Endothelial cell of umbilical vein (primary cell): ENCODE measurements at regions of chr6 and their contacts with region 1.

Region 1: GRCh38 chr6:99151634-99152344 is 197.7 kb downstream of the FAXC start:
- DNase-seq: peak; percentile 29
- H3K4me3 ChIP-seq: no peak overlapping the region
- H3K27ac ChIP-seq: no peak overlapping the region
- H3K4me1 ChIP-seq: no peaks in the 10 kb centered on the region
- H3K27me3 ChIP-seq: no peaks in the 10 kb centered on the region
- CTCF ChIP-seq: peak; percentile 66 to 67
- POLR2A ChIP-seq: no peak

Region 2: DNA sequence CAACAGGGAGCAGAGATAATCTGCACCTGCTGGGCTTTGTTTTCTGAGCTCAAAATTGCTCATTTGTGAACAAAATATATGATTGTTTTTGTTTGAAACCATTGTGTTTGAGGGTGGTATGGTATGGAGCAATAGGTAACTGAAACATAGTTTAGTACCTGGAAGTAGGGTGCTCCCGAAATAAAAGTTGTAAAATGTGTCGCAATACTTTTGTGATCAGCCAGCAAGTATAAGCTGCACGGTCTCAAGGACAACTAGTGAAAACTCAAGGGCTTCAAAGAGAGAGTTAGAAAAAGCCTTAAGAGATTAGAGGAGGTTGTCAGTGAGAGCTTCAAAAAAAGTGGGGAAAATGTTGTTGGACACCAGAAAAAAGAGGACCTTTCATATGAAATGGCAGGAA is 897.2 kb before region 1 on chr6:
- CTCF ChIA-PET with region 1: no interaction called
- POLR2A ChIA-PET with region 1: no interaction called
- dilution Hi-C with region 1: no loop called
- intact Hi-C with region 1: no loop called
- DNase-seq: no peak
- H3K4me3 ChIP-seq: no peak overlapping the region
- H3K27ac ChIP-seq: no peak overlapping the region
- H3K4me1 ChIP-seq: no peaks in the 10 kb centered on the region
- H3K27me3 ChIP-seq: no peaks in the 10 kb centered on the region
- CTCF ChIP-seq: no peak
- POLR2A ChIP-seq: no peak

Region 3: DNA sequence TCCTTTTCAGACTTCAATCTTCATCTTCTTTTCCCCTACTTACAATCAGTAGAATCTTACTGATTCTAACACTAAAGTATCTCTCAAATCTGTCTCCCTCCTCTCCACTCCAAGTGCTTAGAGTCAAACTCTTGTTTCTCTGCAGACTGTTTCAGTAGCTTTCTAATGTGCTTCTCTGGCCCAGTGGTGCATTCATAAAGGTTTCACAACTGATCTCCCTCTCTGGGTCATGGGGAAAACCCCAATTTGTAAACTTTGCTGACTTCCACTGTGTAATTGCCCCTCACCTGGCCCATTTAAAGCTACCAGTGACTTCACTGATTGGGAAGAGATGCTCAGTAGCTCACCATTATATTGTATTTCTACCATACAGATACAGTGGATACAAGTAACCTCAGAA is 14.0 kb after region 1 on chr6:
- CTCF ChIA-PET with region 1: interaction called, 14 read pairs
- POLR2A ChIA-PET with region 1: no interaction called
- dilution Hi-C with region 1: no loop called
- intact Hi-C with region 1: no loop called
- DNase-seq: no peak
- H3K4me3 ChIP-seq: no peak overlapping the region
- H3K27ac ChIP-seq: no peak overlapping the region
- H3K4me1 ChIP-seq: no peaks in the 10 kb centered on the region
- H3K27me3 ChIP-seq: no peaks in the 10 kb centered on the region
- CTCF ChIP-seq: no peak
- POLR2A ChIP-seq: no peak

Region 4: GRCh38 chr6:99178168-99178567 is 26.4 kb after region 1 on chr6:
- CTCF ChIA-PET with region 1: no interaction called
- POLR2A ChIA-PET with region 1: no interaction called
- dilution Hi-C with region 1: no loop called
- intact Hi-C with region 1: no loop called
- DNase-seq: no peak
- H3K4me3 ChIP-seq: no peak overlapping the region
- H3K27ac ChIP-seq: no peak overlapping the region
- H3K4me1 ChIP-seq: no peaks in the 10 kb centered on the region
- H3K27me3 ChIP-seq: no peaks in the 10 kb centered on the region
- CTCF ChIP-seq: no peak
- POLR2A ChIP-seq: no peak

Region 5: DNA sequence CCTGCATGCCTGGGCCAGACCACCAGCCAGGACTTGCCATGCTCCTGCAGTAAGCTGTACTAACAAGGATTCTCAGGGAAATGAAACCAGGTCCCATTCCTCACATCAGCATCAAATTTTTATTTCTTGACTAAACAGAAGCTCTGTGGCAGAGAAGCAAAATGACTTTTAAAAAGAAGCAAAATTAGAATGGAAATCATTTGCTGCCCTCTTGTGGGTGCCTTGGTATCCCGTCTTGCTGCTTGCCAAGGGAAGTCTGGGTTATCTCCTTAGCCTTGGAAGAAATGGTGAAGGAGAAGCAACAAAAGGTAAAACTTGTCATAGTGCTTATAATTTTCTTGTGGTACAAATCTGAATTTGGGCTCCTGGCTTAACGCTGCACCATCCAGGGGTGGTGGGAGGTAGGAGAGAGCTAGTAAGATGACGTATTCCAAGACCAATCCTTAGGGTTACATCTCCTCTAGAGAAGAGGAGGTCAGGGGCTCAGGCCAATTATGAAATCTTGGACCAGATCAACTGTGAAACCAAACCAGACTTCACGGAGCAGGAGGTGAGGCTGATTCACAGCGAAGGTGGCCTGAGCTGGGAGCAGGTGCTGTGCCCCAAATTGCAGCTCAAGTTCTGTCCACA is 90.2 kb after region 1 on chr6:
- CTCF ChIA-PET with region 1: interaction called, 52 read pairs
- POLR2A ChIA-PET with region 1: no interaction called
- dilution Hi-C with region 1: no loop called
- intact Hi-C with region 1: loop called (anchors 1 kb)
- DNase-seq: peak; percentile 10
- H3K4me3 ChIP-seq: no peak overlapping the region
- H3K27ac ChIP-seq: no peak overlapping the region
- H3K4me1 ChIP-seq: no peaks in the 10 kb centered on the region
- H3K27me3 ChIP-seq: peaks cover 0 to 2% of the 10 kb centered on the region in 2 experiments
- CTCF ChIP-seq: peak; percentile 5 to 31
- POLR2A ChIP-seq: no peak

Region 6: GRCh38 chr6:99575544-99576227 is 423.9 kb after region 1 on chr6:
- CTCF ChIA-PET with region 1: no interaction called
- POLR2A ChIA-PET with region 1: no interaction called
- dilution Hi-C with region 1: no loop called
- intact Hi-C with region 1: no loop called
- DNase-seq: no peak
- H3K4me3 ChIP-seq: no peak overlapping the region
- H3K27ac ChIP-seq: no peak overlapping the region
- H3K4me1 ChIP-seq: no peaks in the 10 kb centered on the region
- H3K27me3 ChIP-seq: peaks cover 2 to 3% of the 10 kb centered on the region in 2 experiments
- CTCF ChIP-seq: no peak
- POLR2A ChIP-seq: no peak